Activated B cell treated with CpG ODN at 0.5 μM for 24 hours (primary cell): ENCODE measurements at regions of chr22 and their contacts with region 1.

Region 1: GRCh38 chr22:41448189-41448808 is 1.7 kb upstream of the TOB2 start:
- DNase-seq: peak; percentile 77
- ATAC-seq: peak; percentile 64
- H3K4me3 Mint-ChIP-seq: peak overlapping the region; percentile 95
- H3K27ac Mint-ChIP-seq: peak overlapping the region; percentile 98
- H3K4me1 Mint-ChIP-seq: peaks cover 20% of the 10 kb centered on the region
- H3K27me3 Mint-ChIP-seq: no peaks in the 10 kb centered on the region
- CTCF ChIP-seq: no peak

Region 2: DNA sequence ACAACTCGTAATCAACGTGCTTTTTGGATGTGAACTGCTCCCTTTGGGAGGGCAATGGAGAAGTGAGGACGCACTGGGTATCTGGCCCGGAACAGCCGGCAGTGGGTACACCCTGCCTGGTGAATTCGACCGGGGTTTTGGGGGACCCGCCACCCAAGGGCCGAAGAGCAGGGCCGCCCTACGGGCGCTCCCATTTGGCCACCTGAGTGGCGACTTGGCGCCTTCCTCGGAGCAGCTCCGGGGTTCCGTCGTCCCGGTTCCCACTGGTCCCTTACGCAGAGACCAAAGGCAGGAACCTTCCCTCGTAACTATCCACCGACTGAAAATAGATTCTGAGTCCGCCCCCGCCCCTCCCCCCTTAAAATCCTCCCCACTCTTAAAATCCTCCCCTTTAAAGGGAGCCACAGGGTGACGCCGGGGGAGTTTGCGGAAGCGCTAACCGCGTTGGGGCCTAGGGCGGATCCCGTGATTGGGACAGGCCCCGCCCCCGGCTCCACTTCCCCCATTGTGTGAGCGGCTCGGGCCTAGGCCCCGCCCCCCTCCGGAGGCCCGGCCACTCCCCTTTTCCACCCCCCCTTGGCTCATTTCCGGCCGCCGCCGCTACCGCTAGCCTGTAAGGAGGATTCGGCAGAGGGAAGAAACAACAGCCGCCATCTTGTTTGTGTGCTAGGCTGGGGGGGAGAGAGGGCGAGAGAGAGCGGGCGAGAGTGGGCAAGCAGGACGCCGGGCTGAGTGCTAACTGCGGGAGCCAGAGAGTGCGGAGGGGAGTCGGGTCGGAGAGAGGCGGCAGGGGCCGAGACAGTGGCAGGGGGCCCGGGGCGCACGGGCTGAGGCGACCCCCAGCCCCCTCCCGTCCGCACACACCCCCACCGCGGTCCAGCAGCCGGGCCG is 356.9 kb before region 1 on chr22:
- CTCF ChIA-PET with region 1: no interaction called
- POLR2A ChIA-PET with region 1: no interaction called
- intact Hi-C with region 1: loop called (anchors 10 kb)
- DNase-seq: peak; percentile 99
- ATAC-seq: peak; percentile 83
- H3K4me3 Mint-ChIP-seq: peak overlapping the region; percentile 98
- H3K27ac Mint-ChIP-seq: peak overlapping the region; percentile 99
- H3K4me1 Mint-ChIP-seq: peaks cover 33% of the 10 kb centered on the region
- H3K27me3 Mint-ChIP-seq: no peaks in the 10 kb centered on the region
- CTCF ChIP-seq: no peak

Region 3: DNA sequence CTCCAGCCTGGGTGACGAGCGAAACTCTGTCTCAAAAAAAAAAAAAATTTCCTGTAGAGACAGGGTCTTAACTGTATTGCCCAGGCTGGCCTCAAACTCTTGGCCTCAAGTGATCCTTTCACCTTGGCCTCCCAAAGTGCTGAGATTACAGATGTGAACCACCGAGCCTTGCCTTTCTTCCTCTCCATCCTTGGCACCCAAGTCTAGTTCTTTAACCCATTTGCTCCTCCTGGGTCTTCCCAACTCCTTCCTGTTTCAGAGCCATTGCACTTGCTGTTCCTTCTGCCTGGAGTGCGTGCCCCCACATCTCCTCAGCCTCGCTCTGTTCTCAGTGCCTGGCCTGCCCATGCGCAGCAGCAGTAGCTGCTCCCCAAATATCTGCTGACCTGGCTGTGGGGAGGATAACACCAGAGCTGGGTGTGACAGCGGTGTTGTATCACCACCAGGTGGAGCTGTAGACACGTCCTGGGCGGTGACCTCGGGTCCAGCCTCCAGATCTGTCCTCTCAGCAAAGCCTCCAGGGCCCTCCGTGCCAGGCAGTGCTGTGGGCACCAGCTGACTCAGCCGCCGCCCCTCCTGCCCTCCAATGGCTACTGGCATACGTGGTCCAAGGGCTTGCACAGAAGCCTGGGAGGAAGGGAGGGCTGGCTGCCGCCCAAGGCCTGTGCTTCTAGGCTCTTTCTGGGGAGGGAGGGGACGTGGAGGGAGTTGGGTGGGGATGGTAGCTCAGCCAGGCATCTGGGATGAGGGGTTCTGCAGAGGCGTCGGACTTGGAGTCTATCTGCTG is 44.6 kb before region 1 on chr22:
- CTCF ChIA-PET with region 1: interaction called, 7 read pairs
- POLR2A ChIA-PET with region 1: no interaction called
- intact Hi-C with region 1: loop called (anchors 1 kb)
- DNase-seq: peak; percentile 69
- ATAC-seq: peak; percentile 87
- H3K4me3 Mint-ChIP-seq: no peak overlapping the region
- H3K27ac Mint-ChIP-seq: peak overlapping the region; percentile 20
- H3K4me1 Mint-ChIP-seq: peaks cover 37% of the 10 kb centered on the region
- H3K27me3 Mint-ChIP-seq: no peaks in the 10 kb centered on the region
- CTCF ChIP-seq: peak; percentile 33

Region 4: GRCh38 chr22:41468381-41469217 is 20.3 kb after region 1 on chr22 and contains the starts of genes ACO2 and PHF5A:
- CTCF ChIA-PET with region 1: no interaction called
- POLR2A ChIA-PET with region 1: interaction called, 584 read pairs
- intact Hi-C with region 1: loop called (anchors 1 kb)
- DNase-seq: peak; percentile 98
- ATAC-seq: peak; percentile 90
- H3K4me3 Mint-ChIP-seq: peak within 1 kb of the TSS; percentile 88
- H3K27ac Mint-ChIP-seq: peak within 1 kb of the TSS; percentile 99
- H3K4me1 Mint-ChIP-seq: peaks cover 53% of the 10 kb centered on the region
- H3K27me3 Mint-ChIP-seq: no peaks in the 10 kb centered on the region
- CTCF ChIP-seq: no peak
- total RNA-seq, gene ACO2: 152 and 153 TPM in 2 replicates
- total RNA-seq, gene PHF5A: 47.4 and 54.0 TPM in 2 replicates

Region 5: GRCh38 chr22:41526837-41527799 is 78.8 kb after region 1 on chr22:
- CTCF ChIA-PET with region 1: interaction called, 3 read pairs
- POLR2A ChIA-PET with region 1: interaction called, 8 read pairs
- intact Hi-C with region 1: loop called (anchors 2 kb)
- DNase-seq: peak; percentile 67
- ATAC-seq: peak; percentile 73
- H3K4me3 Mint-ChIP-seq: no peak overlapping the region
- H3K27ac Mint-ChIP-seq: peak overlapping the region; percentile 25
- H3K4me1 Mint-ChIP-seq: peaks cover 19% of the 10 kb centered on the region
- H3K27me3 Mint-ChIP-seq: no peaks in the 10 kb centered on the region
- CTCF ChIP-seq: no peak

Region 6: GRCh38 chr22:41666661-41667258 is 218.5 kb after region 1 on chr22:
- CTCF ChIA-PET with region 1: no interaction called
- POLR2A ChIA-PET with region 1: interaction called, 4 read pairs
- intact Hi-C with region 1: loop called (anchors 2 kb)
- DNase-seq: peak; percentile 94
- ATAC-seq: peak; percentile 95
- H3K4me3 Mint-ChIP-seq: peak overlapping the region; percentile 84
- H3K27ac Mint-ChIP-seq: peak overlapping the region; percentile 92
- H3K4me1 Mint-ChIP-seq: peaks cover 5% of the 10 kb centered on the region
- H3K27me3 Mint-ChIP-seq: no peaks in the 10 kb centered on the region
- CTCF ChIP-seq: peak; percentile 74